ENCODE measurements at regions of chr10 and their contacts with region 1.

Region 1: DNA sequence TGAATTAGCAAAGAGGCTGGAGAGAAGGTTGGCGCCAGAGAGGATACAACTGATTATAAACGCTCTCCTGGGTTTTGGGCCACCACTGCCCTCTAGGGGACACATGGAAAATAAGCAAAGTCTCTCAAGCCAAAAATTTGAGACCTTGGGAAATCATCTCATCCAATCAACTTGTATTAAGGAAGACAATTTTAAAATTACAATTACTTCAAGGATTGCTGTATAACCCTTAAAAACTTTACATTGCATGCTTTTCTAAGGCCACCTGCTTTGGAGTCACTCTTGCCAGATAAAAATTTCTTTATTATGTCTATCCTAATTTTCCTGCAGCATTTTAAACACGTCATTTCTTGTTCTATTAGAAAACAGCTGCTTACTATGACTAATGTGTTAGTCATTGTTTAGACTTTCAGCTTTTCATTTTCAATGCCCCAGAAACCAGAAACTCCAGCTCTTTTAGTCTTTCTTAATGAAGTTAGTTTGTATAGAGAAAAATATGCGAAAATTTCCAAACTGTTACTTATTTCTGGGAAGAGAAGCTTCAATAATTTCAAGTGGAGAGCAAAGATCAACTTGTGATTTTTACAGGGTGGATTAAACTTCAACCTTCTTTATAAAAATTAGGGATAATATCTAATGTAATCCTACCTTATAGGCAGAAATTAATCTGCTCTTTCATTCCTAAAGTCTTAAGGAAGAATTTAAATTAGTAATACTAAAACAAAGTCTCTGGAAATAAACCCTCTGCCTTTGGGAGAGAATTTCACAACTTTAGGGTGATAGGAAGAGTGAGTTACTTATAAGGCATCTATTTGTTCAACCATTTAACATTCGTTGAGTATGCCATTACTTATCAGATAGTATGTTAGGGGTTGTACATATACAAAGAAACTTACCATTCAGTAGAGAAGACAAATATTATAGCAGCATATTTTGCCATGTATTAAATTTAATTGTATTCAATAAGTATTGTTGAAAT is 20.6 kb upstream of the RHOBTB1 start:
- DNase-seq: peak; percentile 71 to 88 (median 78)
- ATAC-seq: peak; percentile 86
- H3K4me3 ChIP-seq: no peak overlapping the region
- H3K27ac ChIP-seq: no peak overlapping the region
- H3K4me1 ChIP-seq: peaks cover 3 to 24% of the 10 kb centered on the region in 2 experiments; a peak in 4 of 5 replicates
- H3K27me3 ChIP-seq: no peaks in the 10 kb centered on the region
- CTCF ChIP-seq: peak; percentile 82 to 94 (median 87)
- EP300 ChIP-seq: 0 out of 2 replicates have a peak, but pooled peaks have one; percentile 20
- POLR2A ChIP-seq: no peak
- RAD21 ChIP-seq: peak; percentile 91 to 94

Region 2: DNA sequence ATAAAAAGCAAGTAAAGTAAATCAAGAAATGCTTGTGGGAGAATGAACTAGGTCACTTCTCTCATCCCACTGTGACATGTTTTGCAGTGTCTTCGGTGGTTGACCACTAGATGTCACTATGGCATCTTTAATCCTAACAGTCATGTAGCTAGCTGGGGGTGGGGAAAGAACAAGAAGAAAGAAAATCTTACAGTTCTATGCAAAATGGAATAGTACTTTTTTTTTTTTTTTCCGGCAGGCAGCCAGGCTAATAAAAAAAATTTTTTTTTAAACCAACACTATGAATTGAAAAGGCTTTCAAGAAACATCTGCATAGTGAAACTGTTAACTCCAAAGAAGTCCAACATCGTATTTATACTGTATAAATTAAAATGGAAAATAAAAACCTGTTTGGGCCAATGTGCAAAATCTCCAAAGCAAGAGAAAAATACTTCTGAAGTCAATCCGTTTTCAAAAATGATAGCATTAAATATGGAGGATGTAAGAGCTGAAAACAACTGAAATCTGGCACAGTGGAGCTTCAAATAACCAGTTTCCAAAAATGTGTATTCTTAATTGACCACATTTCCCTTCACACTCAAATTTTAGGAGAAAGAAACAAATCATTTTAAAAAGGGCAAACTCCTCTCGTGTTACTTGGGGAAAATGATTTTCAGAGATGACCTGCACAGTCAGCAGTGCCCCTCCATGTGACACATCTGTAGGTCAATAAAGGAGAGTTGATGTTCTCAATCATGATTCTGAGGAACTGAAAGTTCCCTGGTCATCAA is 147.7 kb before region 1 on chr10:
- CTCF ChIA-PET with region 1: interaction called, 9 read pairs
- POLR2A ChIA-PET with region 1: no interaction called
- in situ Hi-C with region 1: loop called (anchors 10 kb)
- intact Hi-C with region 1: loop called (anchors 1 kb)
- DNase-seq: peak; percentile 87 to 89 (median 88)
- ATAC-seq: peak; percentile 95
- H3K4me3 ChIP-seq: no peak overlapping the region
- H3K27ac ChIP-seq: no peak overlapping the region
- H3K4me1 ChIP-seq: no peaks in the 10 kb centered on the region
- H3K27me3 ChIP-seq: no peaks in the 10 kb centered on the region
- CTCF ChIP-seq: peak; percentile 80 to 93 (median 82)
- EP300 ChIP-seq: no peak
- POLR2A ChIP-seq: no peak
- RAD21 ChIP-seq: peak; percentile 95 to 98

Region 3: GRCh38 chr10:60870424-60870728 is 94.2 kb before region 1 on chr10:
- CTCF ChIA-PET with region 1: no interaction called
- POLR2A ChIA-PET with region 1: no interaction called
- in situ Hi-C with region 1: no loop called
- intact Hi-C with region 1: loop called (anchors 1 kb)
- DNase-seq: no peak
- ATAC-seq: no peak
- H3K4me3 ChIP-seq: no peak overlapping the region
- H3K27ac ChIP-seq: no peak overlapping the region
- H3K4me1 ChIP-seq: no peaks in the 10 kb centered on the region
- H3K27me3 ChIP-seq: no peaks in the 10 kb centered on the region
- CTCF ChIP-seq: peak in 2 of 3 experiments; percentile 9 to 28; a peak in 2 of 6 replicates
- EP300 ChIP-seq: no peak
- POLR2A ChIP-seq: no peak
- RAD21 ChIP-seq: no peak

Region 4: DNA sequence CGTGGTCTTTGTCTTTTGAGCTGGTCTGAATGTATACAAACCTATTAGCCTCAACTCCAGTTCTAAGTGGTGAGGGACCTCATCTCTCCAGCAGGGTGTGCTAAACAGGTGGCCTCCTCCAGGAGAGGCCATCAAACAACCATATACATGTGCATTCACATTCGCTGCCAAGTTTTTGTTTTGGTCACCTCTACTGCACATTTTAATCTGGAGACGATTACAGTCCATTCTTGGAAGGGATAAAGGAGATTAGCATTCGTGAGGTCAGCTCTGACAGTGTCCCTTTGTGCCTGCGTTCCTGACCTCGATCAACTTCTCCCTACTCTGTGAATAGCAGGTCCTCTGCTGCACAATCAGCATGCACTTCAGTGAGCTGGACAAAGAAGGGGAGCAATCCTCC is 81.4 kb before region 1 on chr10:
- CTCF ChIA-PET with region 1: interaction called, 11 read pairs
- POLR2A ChIA-PET with region 1: no interaction called
- in situ Hi-C with region 1: no loop called
- intact Hi-C with region 1: loop called (anchors 1 kb)
- DNase-seq: peak; percentile 41 to 62 (median 53)
- ATAC-seq: peak; percentile 98
- H3K4me3 ChIP-seq: no peak overlapping the region
- H3K27ac ChIP-seq: no peak overlapping the region
- H3K4me1 ChIP-seq: no peaks in the 10 kb centered on the region; a peak in 1 of 5 replicates
- H3K27me3 ChIP-seq: no peaks in the 10 kb centered on the region
- CTCF ChIP-seq: peak; percentile 68 to 76 (median 76)
- EP300 ChIP-seq: no peak
- POLR2A ChIP-seq: no peak
- RAD21 ChIP-seq: peak; percentile 66 to 81